ENCODE measurements at regions of chr9 and their contacts with region 1.

Region 1: GRCh38 chr9:106892632-106893031 is 29.7 kb downstream of the ZNF462 start:
- DNase-seq: peak in 1 of 2 experiments; percentile 83
- H3K4me3 ChIP-seq: peak overlapping the region in 1 of 4 experiments; percentile 5; a peak in 1 of 8 replicates
- H3K27ac ChIP-seq: peak overlapping the region; percentile 29; the same call in 1 of the 2 replicates
- H3K4me1 ChIP-seq: peaks cover 4 to 35% (median 23%) of the 10 kb centered on the region in 4 experiments
- H3K27me3 ChIP-seq: no peaks in the 10 kb centered on the region
- CTCF ChIP-seq: no peak
- EP300 ChIP-seq: no peak
- POLR2A ChIP-seq: no peak
- RAD21 ChIP-seq: no peak

Region 2: GRCh38 chr9:106878924-106879323 is 13.7 kb before region 1 on chr9:
- CTCF ChIA-PET with region 1: interaction called, 4 read pairs
- POLR2A ChIA-PET with region 1: interaction called, 20 read pairs
- DNase-seq: no peak
- H3K4me3 ChIP-seq: peak overlapping the region in 2 of 4 experiments; percentile 11 to 49; a peak in 3 of 8 replicates
- H3K27ac ChIP-seq: no peak overlapping the region
- H3K4me1 ChIP-seq: peaks cover 20 to 45% (median 36%) of the 10 kb centered on the region in 4 experiments
- H3K27me3 ChIP-seq: no peaks in the 10 kb centered on the region
- CTCF ChIP-seq: no peak
- EP300 ChIP-seq: no peak
- POLR2A ChIP-seq: no peak
- RAD21 ChIP-seq: no peak

Region 3: GRCh38 chr9:106906136-106906535 is 13.5 kb after region 1 on chr9:
- CTCF ChIA-PET with region 1: interaction called, 10 read pairs
- POLR2A ChIA-PET with region 1: interaction called, 4 read pairs
- DNase-seq: no peak
- H3K4me3 ChIP-seq: no peak overlapping the region
- H3K27ac ChIP-seq: no peak overlapping the region
- H3K4me1 ChIP-seq: no peaks in the 10 kb centered on the region
- H3K27me3 ChIP-seq: no peaks in the 10 kb centered on the region
- CTCF ChIP-seq: no peak
- EP300 ChIP-seq: no peak
- POLR2A ChIP-seq: no peak
- RAD21 ChIP-seq: no peak

Measured in H1 (cell line).